Posterior cingulate gyrus (tissue), 11 donors: ENCODE measurements at regions of chr15 and their contacts with region 1.

Region 1: GRCh38 chr15:55168329-55168974 is 28.3 kb downstream of the RSL24D1 start:
- DNase-seq: peak; percentile 30 to 94 (median 60)

Region 2: DNA sequence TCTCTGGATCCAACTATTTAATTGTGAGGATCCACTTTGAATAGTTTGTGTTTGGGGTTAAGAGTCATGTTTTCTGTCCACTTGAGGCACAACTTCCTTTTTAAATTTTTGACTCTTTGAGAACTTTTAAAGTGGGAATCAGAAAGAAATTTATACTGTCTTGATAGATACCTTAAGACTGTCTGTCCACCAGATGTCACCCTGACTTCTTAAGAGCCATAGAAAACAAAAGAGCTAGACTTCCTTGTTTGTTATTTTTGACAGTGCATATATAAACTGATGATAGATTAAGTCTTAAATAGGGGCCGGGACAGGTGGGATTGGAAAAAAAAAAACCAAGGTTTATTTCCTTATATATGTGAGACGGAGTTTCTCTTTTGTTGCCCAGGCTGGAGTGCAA is 1356.9 kb before region 1 on chr15:
- intact Hi-C with region 1: loop called (anchors 10 kb)
- DNase-seq: no peak

Region 3: DNA sequence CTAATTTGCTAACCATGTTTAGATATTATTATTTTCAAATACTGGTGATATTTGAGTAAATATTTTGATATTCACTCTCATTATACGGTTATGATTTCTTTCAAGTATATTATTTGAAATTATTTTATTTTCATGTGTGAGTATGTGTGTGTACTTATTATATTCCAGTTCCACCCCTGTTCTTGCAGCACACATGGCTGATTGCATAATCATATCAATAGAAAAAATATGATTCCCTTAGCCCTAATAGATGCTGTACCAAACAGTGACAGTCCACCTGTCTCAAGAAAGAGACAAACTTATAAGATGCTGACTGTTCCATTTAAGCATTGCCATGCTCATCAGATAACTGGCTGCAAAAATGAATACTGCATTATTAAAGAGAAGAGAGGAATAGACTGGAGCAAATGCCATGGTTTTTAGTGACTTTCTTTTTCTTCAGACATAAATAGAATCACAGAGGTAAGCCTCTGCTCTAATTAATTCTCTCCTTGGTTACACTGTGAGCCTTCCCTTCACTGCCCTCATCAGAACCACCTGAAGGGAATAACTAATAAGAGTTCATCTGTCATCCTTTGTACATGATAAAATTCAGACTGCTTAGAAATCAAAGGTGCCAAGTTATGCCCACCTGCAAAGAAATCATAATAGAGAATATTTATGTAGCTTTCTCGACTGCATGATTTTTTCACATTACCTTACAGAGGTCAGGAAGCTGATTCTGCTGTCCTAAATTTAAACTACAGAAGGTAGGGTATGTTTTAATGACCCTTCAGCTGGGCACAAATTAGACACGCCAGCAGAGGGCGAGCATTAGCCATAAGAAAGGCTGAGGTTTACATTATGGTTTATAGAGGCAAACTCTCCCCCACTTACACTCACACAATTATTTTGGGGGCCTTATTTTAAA is 1205.9 kb before region 1 on chr15:
- intact Hi-C with region 1: loop called (anchors 2 kb)
- DNase-seq: peak in 6 of 10 donors; percentile 19 to 78 (median 41)

Region 4: DNA sequence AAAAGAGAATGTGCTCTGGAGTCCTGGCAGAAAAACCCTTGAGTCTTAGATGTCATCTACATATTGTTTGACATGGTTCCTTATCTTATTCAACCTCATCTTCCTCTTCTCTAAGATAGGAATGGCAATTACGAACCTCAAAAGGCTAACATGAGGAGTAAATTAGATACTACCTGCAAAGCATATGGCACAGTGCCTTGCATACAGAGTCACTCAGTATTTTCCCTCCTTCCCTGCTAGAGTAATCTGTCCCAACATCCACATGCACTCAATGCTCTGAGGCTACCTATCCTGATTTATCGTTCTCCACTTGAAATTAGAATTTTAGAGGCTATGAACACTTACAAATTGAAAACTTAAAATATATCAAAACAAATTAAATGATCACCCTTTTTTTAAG is 358.4 kb before region 1 on chr15:
- intact Hi-C with region 1: no loop called
- DNase-seq: no peak

Region 5: GRCh38 chr15:55552926-55553325 is 384.5 kb after region 1 on chr15:
- intact Hi-C with region 1: no loop called
- DNase-seq: peak in 1 of 10 donors; percentile 70

Region 6: DNA sequence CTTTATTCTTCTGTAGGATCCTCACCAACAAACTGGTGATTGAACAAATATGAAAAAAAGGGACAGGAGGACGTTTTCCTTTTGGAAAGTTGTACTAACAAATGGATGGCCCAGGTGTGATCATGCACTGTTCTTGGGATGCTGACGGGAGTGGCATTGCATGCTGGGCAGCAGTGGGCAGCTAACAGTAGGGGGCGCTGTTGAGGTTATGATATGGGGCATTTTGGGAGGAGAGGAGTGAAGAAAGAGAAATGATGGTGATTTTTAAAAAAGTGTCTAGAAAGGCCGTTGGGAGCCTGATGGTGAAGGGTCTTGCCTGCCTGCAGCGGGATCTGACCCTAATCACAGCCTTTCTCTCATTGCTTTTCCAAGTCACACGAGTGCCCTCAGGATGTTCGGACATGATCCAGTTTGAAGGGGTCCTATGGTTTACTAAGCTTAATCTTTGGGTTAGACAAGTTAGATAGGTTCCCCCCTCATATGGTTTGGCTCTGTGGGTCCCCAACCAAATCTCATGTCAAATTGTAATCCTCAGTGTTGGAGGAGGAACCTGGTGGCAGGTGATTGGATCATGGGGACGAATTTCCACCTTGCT is 620.7 kb after region 1 on chr15:
- intact Hi-C with region 1: no loop called
- DNase-seq: peak in 3 of 10 donors; percentile 22 to 45 (median 27)